ENCODE measurements at regions of chr5 and their contacts with region 1.

Region 1: DNA sequence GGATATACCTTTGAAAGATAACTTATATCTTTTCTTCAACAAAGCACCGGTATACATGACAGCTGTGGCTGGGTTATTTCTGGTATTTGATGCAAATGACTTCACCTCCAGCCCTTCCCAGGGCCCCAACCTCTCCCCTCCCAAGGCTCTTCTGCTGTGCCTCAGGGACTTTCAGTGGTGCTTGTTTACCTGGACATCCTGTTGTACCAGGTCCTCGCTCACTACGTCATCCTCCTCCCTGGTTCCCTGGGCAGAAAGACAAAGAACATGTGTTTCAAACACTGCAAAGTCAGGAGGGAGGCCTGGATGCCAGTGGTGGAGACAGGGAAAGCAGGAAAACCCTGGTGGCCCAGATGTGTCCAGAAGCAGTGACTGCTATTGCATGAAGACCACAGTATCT is 23.3 kb downstream of the ANXA6 start:
- DNase-seq: peak; percentile 61
- H3K4me3 ChIP-seq: peak overlapping the region; percentile 37
- H3K27ac ChIP-seq: peak overlapping the region; percentile 84
- H3K4me1 ChIP-seq: peaks cover 93% of the 10 kb centered on the region
- CTCF ChIP-seq: no peak

Region 2: DNA sequence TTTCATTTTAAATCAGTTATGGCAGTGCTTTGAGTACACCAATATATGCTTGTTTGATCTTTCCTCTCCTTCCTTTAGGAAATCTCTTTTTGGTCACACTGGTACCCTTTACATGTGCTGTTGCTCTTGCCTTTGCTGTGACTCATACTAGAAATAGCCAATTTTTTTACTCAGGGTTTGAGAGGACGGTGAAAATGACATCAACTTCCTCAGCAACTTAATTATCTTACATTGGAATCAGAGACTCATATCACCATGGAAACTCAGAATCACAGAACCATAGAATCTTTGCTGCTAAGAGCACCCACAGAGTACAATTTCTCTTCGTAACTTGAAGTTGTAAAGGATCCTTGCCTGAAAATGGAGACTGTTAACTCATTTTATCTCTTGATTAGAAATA is 215.6 kb before region 1 on chr5:
- CTCF ChIA-PET with region 1: no interaction called
- POLR2A ChIA-PET with region 1: no interaction called
- intact Hi-C with region 1: no loop called
- DNase-seq: no peak
- H3K4me3 ChIP-seq: no peak overlapping the region
- H3K27ac ChIP-seq: no peak overlapping the region
- H3K4me1 ChIP-seq: no peaks in the 10 kb centered on the region
- CTCF ChIP-seq: no peak

Region 3: GRCh38 chr5:151150471-151151262 is 16.4 kb after region 1 on chr5:
- CTCF ChIA-PET with region 1: interaction called, 7 read pairs
- POLR2A ChIA-PET with region 1: interaction called, 83 read pairs
- intact Hi-C with region 1: no loop called
- DNase-seq: peak; percentile 81
- H3K4me3 ChIP-seq: peak overlapping the region; percentile 31
- H3K27ac ChIP-seq: peak overlapping the region; percentile 90
- H3K4me1 ChIP-seq: peaks cover 79% of the 10 kb centered on the region
- CTCF ChIP-seq: no peak

Region 4: GRCh38 chr5:151157426-151158286 is 23.4 kb after region 1 on chr5 and contains the start of gene ANXA6:
- CTCF ChIA-PET with region 1: interaction called, 3 read pairs
- POLR2A ChIA-PET with region 1: interaction called, 4 read pairs
- intact Hi-C with region 1: loop called (anchors 2 kb)
- DNase-seq: no peak
- H3K4me3 ChIP-seq: peak within 1 kb of the TSS; percentile 59
- H3K27ac ChIP-seq: peak within 1 kb of the TSS; percentile 68
- H3K4me1 ChIP-seq: peaks cover 72% of the 10 kb centered on the region
- CTCF ChIP-seq: no peak
- total RNA-seq, gene ANXA6: 26.1 and 35.6 TPM in 2 replicates

Region 5: DNA sequence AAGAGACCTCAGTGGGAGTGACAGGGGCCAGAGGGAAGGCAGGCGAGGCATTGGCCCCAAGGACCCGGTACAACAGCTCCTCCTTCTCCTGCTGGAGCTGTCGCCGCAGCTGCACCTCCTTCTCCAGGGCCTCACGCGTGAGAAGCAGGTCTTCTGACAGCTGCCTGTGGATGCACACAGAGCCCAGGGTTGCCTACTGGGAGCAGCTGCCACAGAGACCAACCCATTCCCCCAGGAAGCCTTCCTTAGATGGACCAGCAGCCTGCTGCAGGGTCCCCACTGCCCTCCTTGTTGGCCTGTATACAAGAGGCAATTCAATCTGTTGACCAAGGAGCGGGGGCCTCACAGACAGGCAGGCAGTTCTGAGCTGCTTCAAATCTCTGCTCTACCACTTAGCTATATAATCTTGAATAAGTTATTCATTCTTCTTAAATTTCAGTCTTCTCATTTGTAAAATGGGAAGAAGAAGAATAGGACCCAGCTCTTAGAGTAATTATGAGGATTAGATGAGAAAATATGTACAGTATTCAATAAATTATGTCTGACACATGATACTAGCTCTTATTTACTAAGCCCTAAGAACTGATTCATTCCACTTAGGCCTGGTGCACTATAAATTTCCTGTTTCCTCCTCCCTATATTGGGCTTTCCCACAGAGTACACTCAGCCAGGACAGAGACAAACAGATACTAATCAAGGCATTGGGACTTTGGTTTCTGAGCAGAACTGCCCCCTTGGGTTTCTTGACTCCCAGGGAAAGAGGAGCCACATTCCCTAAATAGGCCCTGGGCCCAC is 49.4 kb after region 1 on chr5:
- CTCF ChIA-PET with region 1: no interaction called
- POLR2A ChIA-PET with region 1: no interaction called
- intact Hi-C with region 1: no loop called
- DNase-seq: no peak
- H3K4me3 ChIP-seq: no peak overlapping the region
- H3K27ac ChIP-seq: no peak overlapping the region
- H3K4me1 ChIP-seq: peaks cover 4% of the 10 kb centered on the region
- CTCF ChIP-seq: no peak

Region 6: DNA sequence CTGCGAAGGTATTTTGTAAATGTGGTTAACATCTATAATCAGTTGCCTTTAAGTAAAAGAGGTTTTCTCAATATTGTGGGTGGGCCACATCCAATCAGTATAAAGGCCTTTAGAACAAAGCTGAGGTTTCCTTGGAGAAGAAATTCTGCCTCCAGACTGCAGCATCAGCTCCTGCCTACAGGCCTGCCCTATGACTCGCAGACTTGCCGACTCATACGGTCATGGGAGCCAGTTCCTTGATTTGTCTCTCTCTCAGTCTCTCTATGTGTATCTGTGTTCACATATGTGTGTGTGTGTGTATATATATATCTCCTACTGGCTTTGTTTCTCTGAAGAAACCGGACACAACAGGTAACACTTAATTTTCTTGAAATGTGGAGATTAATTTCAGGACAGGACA is 358.5 kb after region 1 on chr5:
- CTCF ChIA-PET with region 1: no interaction called
- POLR2A ChIA-PET with region 1: no interaction called
- intact Hi-C with region 1: no loop called
- DNase-seq: no peak
- H3K4me3 ChIP-seq: no peak overlapping the region
- H3K27ac ChIP-seq: no peak overlapping the region
- H3K4me1 ChIP-seq: no peaks in the 10 kb centered on the region
- CTCF ChIP-seq: no peak